BJ (cell line): ENCODE measurements at regions of chr1 and their contacts with region 1.

Region 1: GRCh38 chr1:999725-1000356 is at the start of gene HES4:
- DNase-seq: peak; percentile 53
- H3K4me3 ChIP-seq: peak within 1 kb of the TSS; percentile 85
- H3K27me3 ChIP-seq: no peaks in the 10 kb centered on the region
- CTCF ChIP-seq: no peak
- polyA plus RNA-seq, gene HES4: 5.6 and 10.8 TPM in 2 replicates

Region 2: GRCh38 chr1:1013105-1013921 is 13.5 kb after region 1 on chr1 and contains the start of gene ISG15:
- CTCF ChIA-PET with region 1: interaction called, 11 read pairs
- POLR2A ChIA-PET with region 1: no interaction called
- DNase-seq: peak; percentile 49
- H3K4me3 ChIP-seq: peak within 1 kb of the TSS; percentile 71
- H3K27me3 ChIP-seq: no peaks in the 10 kb centered on the region
- CTCF ChIP-seq: no peak
- polyA plus RNA-seq, gene ISG15: 73.0 and 86.8 TPM in 2 replicates

Region 3: GRCh38 chr1:1040004-1040991 is 40.5 kb after region 1 on chr1:
- CTCF ChIA-PET with region 1: interaction called, 13 read pairs
- POLR2A ChIA-PET with region 1: interaction called, 3 read pairs
- DNase-seq: no peak
- H3K4me3 ChIP-seq: peak overlapping the region; percentile 40
- H3K27me3 ChIP-seq: no peaks in the 10 kb centered on the region
- CTCF ChIP-seq: peak; percentile 31

Region 4: DNA sequence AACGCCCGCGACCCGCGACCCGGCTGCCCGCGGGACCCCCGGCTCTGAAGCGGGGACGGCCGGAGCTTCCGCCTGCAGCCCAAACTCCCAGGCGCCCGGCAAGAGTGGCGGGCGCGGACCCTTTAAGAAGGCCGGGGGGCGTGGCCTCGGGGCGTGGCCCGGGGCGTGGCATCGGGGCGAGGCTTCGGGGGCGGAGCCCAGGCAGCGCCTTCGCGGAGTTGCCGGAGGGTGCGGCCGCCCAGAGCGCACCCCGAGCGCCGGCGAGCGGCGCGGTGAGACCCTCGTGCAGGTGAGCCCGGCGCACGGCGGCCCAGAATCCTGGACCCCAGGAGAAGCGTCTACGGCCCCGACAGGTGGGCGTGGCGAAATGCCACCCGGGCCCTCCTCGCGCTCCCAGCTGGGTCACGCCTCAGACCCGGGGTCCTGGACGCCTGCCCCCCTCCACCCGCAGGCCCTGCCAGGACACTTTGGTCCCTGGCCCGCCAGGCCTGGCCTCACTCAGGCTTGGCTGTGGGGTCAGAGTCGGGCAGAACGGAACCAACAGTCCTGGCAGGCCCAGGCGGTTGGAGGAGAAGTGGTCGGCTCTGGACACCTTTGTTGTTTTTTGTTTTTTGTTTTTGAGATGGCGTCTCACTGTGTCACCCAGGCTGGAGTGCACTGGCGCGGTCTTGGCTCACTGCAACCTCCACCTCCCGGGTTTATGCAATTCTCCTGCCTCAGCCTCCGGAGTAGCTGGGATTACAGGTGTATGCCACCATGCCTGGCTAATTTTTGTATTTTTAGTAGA is 59.8 kb after region 1 on chr1:
- CTCF ChIA-PET with region 1: interaction called, 14 read pairs
- POLR2A ChIA-PET with region 1: no interaction called
- DNase-seq: no peak
- H3K4me3 ChIP-seq: peak overlapping the region; percentile 49
- H3K27me3 ChIP-seq: no peaks in the 10 kb centered on the region; the same call in 1 of the 2 replicates
- CTCF ChIP-seq: no peak

Region 5: GRCh38 chr1:1291548-1292441 is 292.0 kb after region 1 on chr1:
- CTCF ChIA-PET with region 1: no interaction called
- POLR2A ChIA-PET with region 1: no interaction called
- DNase-seq: no peak
- H3K4me3 ChIP-seq: no peak overlapping the region
- H3K27me3 ChIP-seq: no peaks in the 10 kb centered on the region
- CTCF ChIP-seq: peak; percentile 57